ENCODE measurements at regions of chr15 and their contacts with region 1.

Region 1: GRCh38 chr15:73991726-73992593 is at the start of gene STOML1:
- DNase-seq: peak; percentile 94
- H3K4me3 ChIP-seq: peak within 1 kb of the TSS; percentile 73 to 91 (median 79)
- H3K27ac ChIP-seq: peak within 1 kb of the TSS; percentile 84 to 95 (median 88)
- H3K4me1 ChIP-seq: peaks cover 0 to 82% (median 73%) of the 10 kb centered on the region in 4 donors
- H3K27me3 ChIP-seq: no peaks in the 10 kb centered on the region
- CTCF ChIP-seq: peak; percentile 61 to 94 (median 74)
- EP300 ChIP-seq: no peak
- POLR2A ChIP-seq: peak in 1 of 2 donors; percentile 31
- total RNA-seq, gene STOML1: 10.0 to 17.8 (median 13.8) TPM

Region 2: GRCh38 chr15:74044267-74045110 is 52.5 kb after region 1 on chr15:
- intact Hi-C with region 1: loop called (anchors 5 kb)
- DNase-seq: peak; percentile 83
- H3K4me3 ChIP-seq: no peak overlapping the region
- H3K27ac ChIP-seq: peak overlapping the region; percentile 28 to 60 (median 45)
- H3K4me1 ChIP-seq: peaks cover 0 to 35% (median 33%) of the 10 kb centered on the region in 4 donors
- H3K27me3 ChIP-seq: no peaks in the 10 kb centered on the region
- CTCF ChIP-seq: no peak
- EP300 ChIP-seq: no peak
- POLR2A ChIP-seq: no peak

Measured in sigmoid colon (tissue), 7 donors.